IMR-90 (cell line): ENCODE measurements at regions of chr9 and their contacts with region 1.

Region 1: GRCh38 chr9:94783102-94783664 is 56.7 kb downstream of the AOPEP start:
- DNase-seq: peak; percentile 87
- ATAC-seq: peak; percentile 92
- H3K4me3 ChIP-seq: no peak overlapping the region
- H3K27ac ChIP-seq: peak overlapping the region; percentile 67
- H3K4me1 ChIP-seq: peaks cover 9% of the 10 kb centered on the region
- H3K27me3 ChIP-seq: no peaks in the 10 kb centered on the region
- CTCF ChIP-seq: peak; percentile 77
- POLR2A ChIP-seq: peak; percentile 54; the same call in 1 of the 2 replicates
- RAD21 ChIP-seq: peak; percentile 90

Region 2: DNA sequence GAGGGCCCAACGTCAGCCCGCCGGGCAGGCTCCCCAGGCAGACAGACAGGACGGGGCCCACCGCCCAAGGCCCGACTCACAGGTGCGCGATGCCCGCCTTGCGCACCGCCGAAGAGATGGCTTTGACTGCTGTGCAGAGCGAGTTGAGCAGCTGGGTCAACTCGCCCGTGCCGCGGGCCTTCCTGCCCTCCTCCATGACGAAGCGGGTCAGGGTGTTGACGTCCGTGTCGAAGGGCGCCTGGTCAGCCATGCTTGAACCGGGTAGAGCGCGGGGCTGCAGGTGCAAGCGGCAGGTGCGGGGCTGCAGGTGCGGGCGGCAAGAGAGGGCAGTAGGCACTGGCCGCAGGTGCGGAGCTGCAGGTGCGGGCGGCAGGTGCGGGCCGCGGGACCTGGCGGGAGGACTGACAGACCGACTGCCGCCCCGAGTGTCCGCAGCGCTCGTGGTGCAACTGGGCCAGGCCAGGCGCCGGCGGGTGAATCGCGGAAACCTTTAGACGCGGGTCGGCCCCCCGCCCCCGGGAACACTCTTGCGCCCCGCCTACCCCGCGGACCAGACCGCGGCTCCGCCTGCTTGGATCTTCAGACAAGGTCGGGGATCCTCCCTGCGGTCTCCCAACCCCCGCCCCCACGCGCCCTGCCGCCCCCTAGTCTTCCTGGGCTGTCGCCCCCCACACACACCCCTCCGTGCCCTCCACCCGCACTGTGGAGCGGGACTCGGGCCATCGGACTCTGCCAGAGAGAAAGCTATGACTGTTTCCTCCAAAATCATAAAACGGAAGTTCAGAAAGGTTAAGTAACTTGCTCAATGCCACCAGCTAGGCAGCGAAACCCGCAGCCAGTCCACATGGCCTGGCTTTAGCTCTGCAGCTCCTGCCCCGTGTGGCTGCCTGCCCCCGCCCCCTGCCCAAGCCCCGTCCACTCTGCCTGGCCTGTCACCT is 143.9 kb before region 1 on chr9 and contains the start of gene FBP1:
- CTCF ChIA-PET with region 1: no interaction called
- POLR2A ChIA-PET with region 1: no interaction called
- dilution Hi-C with region 1: no loop called
- in situ Hi-C with region 1: no loop called
- intact Hi-C with region 1: no loop called
- DNase-seq: no peak
- ATAC-seq: peak; percentile 68
- H3K4me3 ChIP-seq: peak within 1 kb of the TSS; percentile 37
- H3K27ac ChIP-seq: no peak within 1 kb of the TSS
- H3K4me1 ChIP-seq: no peaks in the 10 kb centered on the region; the same call in 1 of the 2 replicates
- H3K27me3 ChIP-seq: peaks cover 43% of the 10 kb centered on the region
- CTCF ChIP-seq: no peak
- POLR2A ChIP-seq: no peak
- RAD21 ChIP-seq: no peak
- total RNA-seq, gene FBP1: not detected in 2 replicates

Region 3: DNA sequence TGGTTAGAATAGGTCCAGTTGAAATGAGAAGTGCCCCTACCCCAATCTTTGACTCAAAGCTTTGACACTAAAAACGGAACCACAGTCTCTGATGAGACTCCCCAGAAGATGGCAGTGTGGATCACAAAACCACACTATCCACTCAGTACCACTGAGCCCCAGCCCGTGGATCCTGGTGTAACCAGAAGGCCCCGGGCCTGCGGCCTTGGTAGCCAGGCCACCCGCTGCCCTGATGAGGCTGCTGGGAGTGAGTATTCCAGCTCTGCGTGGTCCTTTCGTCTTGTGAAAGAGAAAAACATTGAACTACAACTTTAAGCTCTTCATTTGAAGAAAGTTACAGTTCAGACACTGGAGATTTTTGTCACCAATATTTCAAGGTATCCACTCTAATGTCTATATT is 101.7 kb before region 1 on chr9:
- CTCF ChIA-PET with region 1: no interaction called
- POLR2A ChIA-PET with region 1: no interaction called
- dilution Hi-C with region 1: no loop called
- in situ Hi-C with region 1: no loop called
- intact Hi-C with region 1: loop called (anchors 2 kb)
- DNase-seq: peak; percentile 80
- ATAC-seq: peak; percentile 99
- H3K4me3 ChIP-seq: no peak overlapping the region
- H3K27ac ChIP-seq: no peak overlapping the region
- H3K4me1 ChIP-seq: no peaks in the 10 kb centered on the region; the same call in 1 of the 2 replicates
- H3K27me3 ChIP-seq: no peaks in the 10 kb centered on the region; the same call in 1 of the 2 replicates
- CTCF ChIP-seq: peak; percentile 85
- POLR2A ChIP-seq: no peak
- RAD21 ChIP-seq: peak; percentile 92

Region 4: DNA sequence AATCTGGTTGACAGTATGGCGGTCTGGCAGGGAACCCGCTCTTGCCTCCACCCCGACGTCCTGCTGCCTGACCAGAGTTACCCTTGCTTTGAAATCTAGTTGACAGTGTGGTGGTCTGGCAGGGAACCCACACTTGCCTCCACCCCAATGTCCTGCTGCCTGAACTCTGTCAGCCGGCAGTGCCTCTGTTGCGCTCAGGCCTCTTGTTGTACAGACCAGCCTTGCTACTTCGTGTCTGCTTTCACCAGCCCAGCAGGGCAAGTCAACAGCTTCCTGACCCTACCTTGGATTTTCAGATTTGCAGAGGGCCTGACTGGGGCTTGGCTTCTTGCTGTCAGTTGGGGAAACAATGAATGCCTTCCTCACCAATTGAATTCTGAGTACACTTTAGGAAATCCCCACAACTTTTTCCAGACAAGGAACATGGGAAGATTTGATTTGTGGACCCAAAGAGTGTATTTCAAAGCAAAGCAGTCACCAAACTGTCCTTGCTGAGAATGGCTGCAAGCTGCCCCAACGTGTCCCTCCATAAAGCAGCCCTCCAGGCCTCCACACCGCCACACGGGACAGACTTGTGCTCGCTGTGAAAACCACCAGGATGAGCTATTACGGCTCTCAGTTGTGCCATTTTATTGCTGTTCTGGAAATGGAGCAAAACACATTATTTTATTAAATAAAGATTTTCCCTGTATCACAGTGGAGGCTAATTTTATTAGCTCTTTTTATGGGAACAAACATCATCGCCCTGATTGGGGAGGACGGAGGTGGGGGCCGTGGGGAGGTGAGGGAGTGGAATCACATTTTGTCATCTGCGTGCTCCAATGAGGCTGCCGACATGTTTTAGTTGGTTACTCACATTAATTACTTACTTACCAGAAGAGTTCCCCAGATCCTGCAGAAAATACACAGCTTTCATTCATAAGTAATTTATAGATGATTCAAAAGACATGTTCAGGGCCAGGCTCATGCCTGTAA is 132.6 kb after region 1 on chr9:
- CTCF ChIA-PET with region 1: interaction called, 3 read pairs
- POLR2A ChIA-PET with region 1: no interaction called
- dilution Hi-C with region 1: no loop called
- in situ Hi-C with region 1: no loop called
- intact Hi-C with region 1: loop called (anchors 2 kb)
- DNase-seq: no peak
- ATAC-seq: no peak
- H3K4me3 ChIP-seq: no peak overlapping the region
- H3K27ac ChIP-seq: peak overlapping the region; percentile 34; the same call in 1 of the 2 replicates
- H3K4me1 ChIP-seq: peaks cover 33% of the 10 kb centered on the region
- H3K27me3 ChIP-seq: no peaks in the 10 kb centered on the region
- CTCF ChIP-seq: no peak
- POLR2A ChIP-seq: no peak
- RAD21 ChIP-seq: no peak

Region 5: GRCh38 chr9:95025213-95026147 is 242.3 kb after region 1 on chr9:
- CTCF ChIA-PET with region 1: no interaction called
- POLR2A ChIA-PET with region 1: no interaction called
- dilution Hi-C with region 1: no loop called
- in situ Hi-C with region 1: loop called (anchors 10 kb)
- intact Hi-C with region 1: loop called (anchors 1 kb)
- DNase-seq: peak; percentile 94
- ATAC-seq: peak; percentile 83
- H3K4me3 ChIP-seq: no peak overlapping the region
- H3K27ac ChIP-seq: peak overlapping the region; percentile 64
- H3K4me1 ChIP-seq: peaks cover 32% of the 10 kb centered on the region
- H3K27me3 ChIP-seq: no peaks in the 10 kb centered on the region
- CTCF ChIP-seq: peak; percentile 48
- POLR2A ChIP-seq: peak; percentile 39; the same call in 1 of the 2 replicates
- RAD21 ChIP-seq: peak; percentile 52

Region 6: GRCh38 chr9:95073021-95073607 is 289.9 kb after region 1 on chr9:
- CTCF ChIA-PET with region 1: interaction called, 4 read pairs
- POLR2A ChIA-PET with region 1: no interaction called
- dilution Hi-C with region 1: no loop called
- in situ Hi-C with region 1: no loop called
- intact Hi-C with region 1: loop called (anchors 5 kb)
- DNase-seq: no peak
- ATAC-seq: peak; percentile 68
- H3K4me3 ChIP-seq: no peak overlapping the region
- H3K27ac ChIP-seq: no peak overlapping the region
- H3K4me1 ChIP-seq: peaks cover 17% of the 10 kb centered on the region
- H3K27me3 ChIP-seq: no peaks in the 10 kb centered on the region
- CTCF ChIP-seq: peak; percentile 35
- POLR2A ChIP-seq: no peak
- RAD21 ChIP-seq: peak; percentile 30; the same call in 1 of the 2 replicates

Region 7: GRCh38 chr9:95127249-95128176 is 344.3 kb after region 1 on chr9:
- CTCF ChIA-PET with region 1: interaction called, 4 read pairs
- POLR2A ChIA-PET with region 1: no interaction called
- dilution Hi-C with region 1: no loop called
- in situ Hi-C with region 1: no loop called
- intact Hi-C with region 1: loop called (anchors 1 kb)
- DNase-seq: peak; percentile 71
- ATAC-seq: peak; percentile 99
- H3K4me3 ChIP-seq: peak overlapping the region; percentile 27; the same call in 1 of the 2 replicates
- H3K27ac ChIP-seq: no peak overlapping the region
- H3K4me1 ChIP-seq: peaks cover 2% of the 10 kb centered on the region; the same call in 1 of the 2 replicates
- H3K27me3 ChIP-seq: no peaks in the 10 kb centered on the region
- CTCF ChIP-seq: peak; percentile 99
- POLR2A ChIP-seq: no peak
- RAD21 ChIP-seq: peak; percentile 87